AG04450 (cell line): ENCODE measurements at regions of chr4 and their contacts with region 1.

Region 1: GRCh38 chr4:145945431-145946155 is 7.0 kb upstream of the ZNF827 start:
- DNase-seq: no peak
- H3K4me3 ChIP-seq: no peak overlapping the region
- H3K27ac ChIP-seq: no peak overlapping the region
- H3K27me3 ChIP-seq: no peaks in the 10 kb centered on the region
- CTCF ChIP-seq: no peak

Region 2: DNA sequence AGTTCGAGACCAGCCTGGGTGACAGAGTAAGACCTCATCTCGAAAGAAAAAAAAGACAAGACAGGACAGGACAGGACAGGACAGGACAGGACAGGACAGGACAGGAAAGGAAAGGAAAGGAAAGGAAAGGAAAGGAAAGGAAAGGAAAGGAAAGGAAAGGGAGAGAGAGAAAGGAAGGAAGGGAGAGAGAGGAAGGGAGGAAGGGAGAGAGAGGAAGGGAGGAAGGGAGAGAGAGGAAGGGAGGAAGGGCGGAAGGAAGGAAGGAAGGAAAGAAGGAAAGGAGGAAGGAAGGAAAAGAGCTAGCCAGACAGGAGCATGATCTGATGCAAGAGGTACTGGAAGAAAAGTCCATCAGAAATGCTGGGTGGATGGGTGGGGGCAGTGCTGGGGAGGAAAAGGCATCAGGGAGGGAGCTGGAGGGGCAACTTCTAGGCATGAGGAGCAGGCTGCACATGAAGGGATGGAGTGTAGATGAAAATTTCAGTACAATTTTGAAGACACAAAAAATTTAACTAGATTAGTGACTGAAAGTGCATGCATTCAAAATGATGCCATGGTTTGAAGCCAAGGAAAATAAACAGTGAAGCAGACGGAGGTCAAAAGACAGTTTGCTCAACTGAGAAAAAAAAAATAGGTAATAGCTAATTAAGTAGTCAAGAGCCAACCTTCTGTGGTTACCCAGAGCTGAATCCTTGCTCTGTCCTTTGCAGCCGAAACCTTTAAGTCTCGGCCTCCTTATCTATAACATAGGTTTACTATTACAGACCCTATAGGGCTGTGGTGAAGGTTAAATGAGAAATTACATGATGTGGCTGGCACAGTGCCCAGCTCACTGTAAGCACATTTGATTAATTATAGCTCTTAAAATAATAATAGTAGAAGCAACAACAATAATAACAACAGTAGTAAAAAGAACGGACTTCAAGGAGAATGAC is 66.8 kb before region 1 on chr4:
- CTCF ChIA-PET with region 1: no interaction called
- POLR2A ChIA-PET with region 1: no interaction called
- DNase-seq: peak; percentile 33
- H3K4me3 ChIP-seq: no peak overlapping the region
- H3K27ac ChIP-seq: no peak overlapping the region
- H3K27me3 ChIP-seq: no peaks in the 10 kb centered on the region
- CTCF ChIP-seq: no peak

Region 3: GRCh38 chr4:145956288-145956890 is 10.8 kb after region 1 on chr4:
- CTCF ChIA-PET with region 1: interaction called, 11 read pairs
- POLR2A ChIA-PET with region 1: no interaction called
- DNase-seq: no peak
- H3K4me3 ChIP-seq: no peak overlapping the region
- H3K27ac ChIP-seq: no peak overlapping the region
- H3K27me3 ChIP-seq: peaks cover 7% of the 10 kb centered on the region
- CTCF ChIP-seq: peak; percentile 81